ENCODE measurements at regions of chr6 and their contacts with region 1.

Region 1: GRCh38 chr6:157428427-157429202 is 47.6 kb downstream of the ZDHHC14 start:
- DNase-seq: peak; percentile 70
- H3K4me3 Mint-ChIP-seq: peak overlapping the region; percentile 55
- H3K27ac Mint-ChIP-seq: peak overlapping the region; percentile 88
- H3K4me1 Mint-ChIP-seq: peaks cover 43% of the 10 kb centered on the region
- H3K27me3 Mint-ChIP-seq: no peaks in the 10 kb centered on the region

Region 2: DNA sequence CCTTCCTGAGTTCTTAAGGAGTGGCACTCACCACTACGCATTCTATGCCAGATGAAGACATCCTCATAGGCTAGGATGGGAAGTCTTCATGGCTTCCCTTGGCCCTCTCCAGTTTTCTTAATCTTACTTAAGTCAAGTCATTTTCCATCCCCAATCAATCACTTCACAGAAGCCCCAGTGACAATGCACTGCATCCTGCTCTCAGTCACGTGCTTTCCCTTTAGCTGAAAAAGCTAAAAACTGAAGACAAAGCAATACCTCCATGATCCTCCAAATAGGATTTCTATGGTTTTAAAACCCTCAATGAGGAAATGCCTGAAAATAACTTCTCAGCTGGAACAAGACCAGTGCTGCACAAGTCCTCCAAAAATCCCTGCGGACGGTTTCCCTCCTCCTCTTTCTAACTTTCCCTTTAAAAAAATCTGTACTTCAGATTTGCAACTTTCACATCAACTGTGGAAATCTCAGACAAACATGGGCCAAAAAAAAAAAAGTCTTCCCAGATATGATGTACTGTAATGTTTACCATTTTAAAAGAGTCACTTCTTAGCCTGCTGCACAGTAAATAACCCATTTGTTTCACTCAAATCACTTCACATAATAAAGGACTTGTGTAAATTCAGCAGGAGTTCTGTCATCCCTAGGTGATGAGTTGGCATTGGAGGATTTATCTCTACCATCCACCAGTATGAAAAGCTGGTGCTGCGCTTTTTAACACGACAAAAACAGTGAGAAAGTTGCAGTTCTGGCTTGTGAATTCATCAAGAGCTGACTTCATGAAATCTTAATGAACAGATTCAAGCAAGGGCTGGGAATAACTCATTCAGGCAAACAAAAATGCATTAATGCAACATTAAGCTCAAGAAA is 1383.0 kb before region 1 on chr6:
- intact Hi-C with region 1: no loop called
- DNase-seq: peak; percentile 19
- H3K4me3 Mint-ChIP-seq: no peak overlapping the region
- H3K27ac Mint-ChIP-seq: no peak overlapping the region
- H3K4me1 Mint-ChIP-seq: no peaks in the 10 kb centered on the region
- H3K27me3 Mint-ChIP-seq: no peaks in the 10 kb centered on the region

Region 3: DNA sequence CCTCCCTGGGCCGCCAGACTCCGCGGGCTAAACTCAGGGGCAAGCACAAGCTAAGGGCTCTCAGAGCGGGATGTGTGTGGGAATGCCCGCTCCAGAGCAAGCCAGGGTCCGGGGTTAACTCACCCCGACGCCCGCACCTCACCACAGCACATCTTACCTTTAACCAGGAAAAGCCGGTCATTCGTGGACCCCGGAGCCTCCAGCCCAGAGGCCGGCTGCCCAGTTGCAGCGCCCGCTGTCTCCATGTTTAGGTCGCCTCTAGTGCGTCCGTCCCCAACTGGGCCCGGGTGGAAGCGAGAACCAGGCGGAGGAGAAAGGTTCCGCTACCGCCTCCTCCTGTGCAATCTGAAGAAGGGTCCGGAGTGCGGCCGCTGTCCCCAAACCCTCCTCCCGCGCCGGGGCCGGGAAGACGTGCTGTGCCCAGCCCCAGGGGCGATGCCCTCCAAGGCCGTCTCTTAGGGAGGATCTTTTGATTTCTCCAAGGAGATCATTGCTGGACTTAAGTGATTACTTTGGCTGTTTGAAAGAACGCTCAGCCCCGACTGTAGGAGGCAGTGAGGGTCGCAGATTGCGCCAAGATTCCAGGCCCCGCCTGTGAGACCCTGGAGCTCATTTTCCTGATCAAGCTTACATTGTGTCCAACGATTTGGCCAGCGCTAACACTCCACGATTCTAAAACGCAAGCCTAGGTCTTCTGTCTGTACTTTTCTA is 105.2 kb before region 1 on chr6 and contains the start of gene TMEM242:
- intact Hi-C with region 1: loop called (anchors 2 kb)
- DNase-seq: peak; percentile 97
- H3K4me3 Mint-ChIP-seq: peak within 1 kb of the TSS; percentile 94
- H3K27ac Mint-ChIP-seq: peak within 1 kb of the TSS; percentile 92
- H3K4me1 Mint-ChIP-seq: peaks cover 39% of the 10 kb centered on the region
- H3K27me3 Mint-ChIP-seq: peaks cover 21% of the 10 kb centered on the region
- total RNA-seq, gene TMEM242: 10.1 and 10.7 TPM in 2 replicates

Region 4: GRCh38 chr6:157379656-157380454 is 48.8 kb before region 1 on chr6:
- intact Hi-C with region 1: loop called (anchors 1 kb)
- DNase-seq: peak; percentile 96
- H3K4me3 Mint-ChIP-seq: peak overlapping the region; percentile 82
- H3K27ac Mint-ChIP-seq: peak overlapping the region; percentile 85
- H3K4me1 Mint-ChIP-seq: peaks cover 31% of the 10 kb centered on the region
- H3K27me3 Mint-ChIP-seq: peaks cover 14% of the 10 kb centered on the region

Region 5: DNA sequence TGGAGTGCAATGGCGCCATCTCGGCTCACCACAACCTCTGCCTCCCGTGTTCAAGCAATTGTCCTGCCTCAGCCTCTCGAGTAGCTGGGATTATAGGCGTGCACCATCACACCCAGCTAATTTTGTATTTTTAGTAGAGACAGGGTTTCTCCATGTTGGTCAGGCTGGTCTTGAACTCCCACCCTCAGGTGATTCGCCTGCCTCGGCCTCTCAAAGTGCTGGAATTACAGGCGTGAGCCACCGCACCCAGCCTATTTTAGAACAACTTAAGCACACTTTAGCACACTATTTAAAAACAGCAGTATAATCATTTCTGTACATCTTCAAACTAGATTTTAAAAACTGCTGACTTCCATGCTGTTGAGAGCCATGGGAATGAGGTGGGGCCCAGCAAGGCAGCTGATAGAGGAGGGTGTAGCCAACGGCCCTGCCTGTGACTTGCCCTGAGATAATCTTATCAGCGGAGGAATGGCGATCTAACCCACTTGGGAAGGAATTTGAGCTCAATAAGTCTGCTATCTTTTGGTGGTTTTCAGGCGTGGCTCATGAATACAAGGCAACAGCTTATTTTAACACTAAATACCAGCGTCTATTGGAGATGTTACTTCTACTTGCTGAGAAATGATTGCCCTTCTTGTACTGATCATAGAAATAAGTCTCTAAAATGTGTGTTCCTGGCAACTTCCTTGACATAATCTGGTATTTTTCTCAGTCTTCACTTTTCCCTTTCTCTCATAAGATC is 35.5 kb before region 1 on chr6:
- intact Hi-C with region 1: no loop called
- DNase-seq: no peak
- H3K4me3 Mint-ChIP-seq: no peak overlapping the region
- H3K27ac Mint-ChIP-seq: no peak overlapping the region
- H3K4me1 Mint-ChIP-seq: peaks cover 9% of the 10 kb centered on the region
- H3K27me3 Mint-ChIP-seq: no peaks in the 10 kb centered on the region

Region 6: DNA sequence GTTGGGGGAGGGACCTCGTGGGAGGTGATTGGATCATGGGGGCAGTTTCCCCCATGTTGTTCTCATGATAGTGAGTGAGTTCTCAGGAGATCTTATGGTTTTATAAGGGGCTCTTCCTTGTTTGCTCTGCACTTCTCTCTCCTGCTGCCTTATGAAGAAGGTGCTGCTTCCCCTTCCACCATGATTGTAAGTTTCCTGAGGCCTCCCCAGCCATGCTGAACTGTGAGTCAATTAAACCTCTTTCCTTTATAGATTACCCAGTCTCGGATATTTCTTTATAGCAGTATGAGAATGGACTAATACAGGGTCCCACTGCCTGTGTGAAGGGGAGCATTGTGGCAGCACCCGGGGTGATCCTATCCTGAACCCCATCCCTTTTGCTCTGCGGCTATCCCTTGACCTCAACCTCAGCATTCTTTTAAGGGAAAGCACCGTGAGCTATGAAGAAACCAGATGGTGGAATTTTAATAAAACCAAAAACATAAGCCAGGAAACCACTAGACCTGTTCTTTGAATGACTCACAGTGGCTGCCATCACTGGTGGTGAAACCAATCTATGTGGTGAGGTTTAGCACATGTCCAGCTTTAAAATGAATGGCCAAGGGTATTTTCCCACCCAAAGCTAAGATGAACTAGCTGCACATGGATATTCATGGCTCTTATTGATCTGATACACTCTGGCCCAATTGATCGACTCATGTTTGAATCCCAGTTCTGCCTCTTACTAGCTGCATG is 14.6 kb after region 1 on chr6:
- intact Hi-C with region 1: loop called (anchors 1 kb)
- DNase-seq: peak; percentile 67
- H3K4me3 Mint-ChIP-seq: no peak overlapping the region
- H3K27ac Mint-ChIP-seq: peak overlapping the region; percentile 74
- H3K4me1 Mint-ChIP-seq: peaks cover 19% of the 10 kb centered on the region
- H3K27me3 Mint-ChIP-seq: no peaks in the 10 kb centered on the region

Region 7: GRCh38 chr6:157535339-157536222 is 107.0 kb after region 1 on chr6:
- intact Hi-C with region 1: loop called (anchors 1 kb)
- DNase-seq: peak; percentile 76
- H3K4me3 Mint-ChIP-seq: peak overlapping the region; percentile 67
- H3K27ac Mint-ChIP-seq: peak overlapping the region; percentile 80
- H3K4me1 Mint-ChIP-seq: peaks cover 49% of the 10 kb centered on the region
- H3K27me3 Mint-ChIP-seq: peaks cover 8% of the 10 kb centered on the region

Measured in activated CD4-positive, alpha-beta T cell treated with anti-CD3 and anti-CD28 coated beads, Interleukin-2, amount 10 ng/mL, durations not matched to agents 24 days and 14 days (primary cell).